ENCODE measurements at regions of chr13 and their contacts with region 1.

Region 1: GRCh38 chr13:29884671-29885430 is 34.4 kb upstream of the UBL3 start:
- DNase-seq: no peak

Region 2: GRCh38 chr13:29707876-29708543 is 176.8 kb before region 1 on chr13:
- intact Hi-C with region 1: no loop called
- DNase-seq: no peak

Region 3: GRCh38 chr13:30395192-30396084 is 510.6 kb after region 1 on chr13:
- intact Hi-C with region 1: no loop called
- DNase-seq: peak; percentile 98

Region 4: GRCh38 chr13:31518645-31519044 is 1633.8 kb after region 1 on chr13:
- intact Hi-C with region 1: loop called in 1 of 2 experiments (anchors 5 kb)
- DNase-seq: no peak

Measured in posterior vena cava (tissue), 2 donors.